ENCODE measurements at regions of chr9 and their contacts with region 1.

Region 1: GRCh38 chr9:17116400-17116837 is 18.4 kb upstream of the CNTLN start:
- DNase-seq: no peak
- ATAC-seq: no peak
- H3K4me3 ChIP-seq: no peak overlapping the region
- H3K27ac ChIP-seq: no peak overlapping the region
- H3K4me1 ChIP-seq: no peaks in the 10 kb centered on the region
- H3K27me3 ChIP-seq: no peaks in the 10 kb centered on the region
- CTCF ChIP-seq: peak in 2 of 5 experiments; percentile 35 to 50
- POLR2A ChIP-seq: no peak

Region 2: DNA sequence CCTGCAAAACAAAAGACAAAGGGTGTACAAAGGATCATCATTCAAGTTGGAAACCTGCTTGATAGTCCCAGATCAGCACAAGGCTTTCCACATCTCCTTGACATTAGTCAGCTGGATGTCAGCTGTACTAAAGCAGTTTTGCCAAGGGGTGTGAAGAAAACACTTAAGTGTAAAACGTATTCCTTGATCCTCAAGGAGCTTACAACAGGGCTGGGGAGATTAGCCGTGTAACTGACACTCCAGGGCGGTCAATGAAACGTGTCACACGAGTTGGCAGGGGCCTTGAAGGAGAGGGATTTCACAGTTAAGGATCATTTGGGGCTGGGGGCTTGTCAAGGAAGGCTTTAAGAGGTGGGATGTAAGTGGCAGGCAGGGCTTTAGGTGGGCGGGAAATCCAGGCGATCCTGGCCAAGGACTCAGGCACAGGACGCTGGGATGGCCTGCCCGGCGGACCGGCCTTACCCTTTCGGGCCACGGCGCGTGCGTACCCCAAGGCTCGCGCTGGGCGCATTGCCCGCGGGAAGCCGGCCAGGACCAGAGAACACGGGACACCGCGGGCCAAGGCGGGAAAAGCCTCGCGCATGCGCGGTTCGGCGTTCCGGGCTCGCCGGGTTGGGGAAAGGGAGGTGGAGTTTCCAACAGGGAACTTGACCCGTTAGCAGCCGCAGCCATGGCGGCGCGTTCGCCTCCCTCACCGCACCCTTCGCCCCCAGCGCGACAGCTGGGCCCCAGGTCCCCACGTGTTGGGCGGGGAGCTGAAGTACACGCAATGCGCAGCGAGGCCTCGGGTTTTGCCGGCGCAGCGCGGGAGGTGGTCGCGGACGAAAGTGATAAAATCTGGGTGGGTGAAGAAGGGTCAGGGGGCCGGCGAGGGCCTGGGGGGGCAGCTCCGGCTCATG is 18.2 kb after region 1 on chr9 and contains the start of gene CNTLN:
- in situ Hi-C with region 1: no loop called
- intact Hi-C with region 1: loop called (anchors 2 kb)
- DNase-seq: peak; percentile 71 to 80
- ATAC-seq: peak; percentile 88 to 92
- H3K4me3 ChIP-seq: peak within 1 kb of the TSS; percentile 70 to 93 (median 83)
- H3K27ac ChIP-seq: peak within 1 kb of the TSS; percentile 78 to 85 (median 82)
- H3K4me1 ChIP-seq: peaks cover 5 to 10% of the 10 kb centered on the region in 2 donors
- H3K27me3 ChIP-seq: no peaks in the 10 kb centered on the region
- CTCF ChIP-seq: peak in 1 of 5 experiments; percentile 8
- POLR2A ChIP-seq: peak; percentile 48 to 58
- total RNA-seq, gene CNTLN: 1.3 to 6.6 (median 2.4) TPM